GM12878 (cell line): ENCODE measurements at regions of chr2 and their contacts with region 1.

Region 1: GRCh38 chr2:219294356-219295351 is 14.5 kb downstream of the PTPRN start:
- DNase-seq: peak; percentile 60
- ATAC-seq: peak; percentile 93
- H3K4me3 ChIP-seq: peak overlapping the region; percentile 59; the same call in 1 of the 2 replicates
- H3K27ac ChIP-seq: no peak overlapping the region
- H3K4me1 ChIP-seq: peaks cover 8% of the 10 kb centered on the region
- H3K27me3 ChIP-seq: peaks cover 0 to 6% of the 10 kb centered on the region in 2 experiments; a peak in 2 of 4 replicates
- CTCF ChIP-seq: peak; percentile 98 to 99 (median 99)
- EP300 ChIP-seq: no peak
- POLR2A ChIP-seq: peak; percentile 77
- RAD21 ChIP-seq: peak; percentile 77

Region 2: GRCh38 chr2:219155054-219155644 is 139.5 kb before region 1 on chr2:
- CTCF ChIA-PET with region 1: interaction called, 208 read pairs
- POLR2A ChIA-PET with region 1: interaction called, 15 read pairs
- RAD21 ChIA-PET with region 1: interaction called, 30 read pairs
- SMC1A ChIA-PET with region 1: interaction called, 49 read pairs
- in situ Hi-C with region 1: loop called (anchors 5 kb)
- intact Hi-C with region 1: loop called (anchors 1 kb)
- DNase-seq: no peak
- ATAC-seq: peak; percentile 77
- H3K4me3 ChIP-seq: no peak overlapping the region
- H3K27ac ChIP-seq: no peak overlapping the region
- H3K4me1 ChIP-seq: peaks cover 4% of the 10 kb centered on the region; the same call in 1 of the 2 replicates
- H3K27me3 ChIP-seq: no peaks in the 10 kb centered on the region
- CTCF ChIP-seq: peak; percentile 37 to 66 (median 39); a peak in 5 of 6 replicates
- EP300 ChIP-seq: no peak
- POLR2A ChIP-seq: no peak
- RAD21 ChIP-seq: peak; percentile 78

Region 3: GRCh38 chr2:219171231-219171651 is 123.4 kb before region 1 on chr2:
- CTCF ChIA-PET with region 1: interaction called, 52 read pairs
- POLR2A ChIA-PET with region 1: interaction called, 12 read pairs
- RAD21 ChIA-PET with region 1: interaction called, 33 read pairs
- SMC1A ChIA-PET with region 1: interaction called, 20 read pairs
- in situ Hi-C with region 1: no loop called
- intact Hi-C with region 1: loop called (anchors 5 kb)
- DNase-seq: no peak
- ATAC-seq: peak; percentile 61
- H3K4me3 ChIP-seq: no peak overlapping the region
- H3K27ac ChIP-seq: no peak overlapping the region
- H3K4me1 ChIP-seq: no peaks in the 10 kb centered on the region; the same call in 1 of the 2 replicates
- H3K27me3 ChIP-seq: no peaks in the 10 kb centered on the region
- CTCF ChIP-seq: peak; percentile 65 to 77 (median 65)
- EP300 ChIP-seq: no peak
- POLR2A ChIP-seq: 0 out of 2 replicates have a peak, but pooled peaks have one; percentile 33
- RAD21 ChIP-seq: peak; percentile 52

Region 4: GRCh38 chr2:219206442-219207253 is 88.0 kb before region 1 on chr2 and contains the start of gene ZFAND2B:
- CTCF ChIA-PET with region 1: interaction called, 8 read pairs
- POLR2A ChIA-PET with region 1: interaction called, 12 read pairs
- RAD21 ChIA-PET with region 1: interaction called, 13 read pairs
- SMC1A ChIA-PET with region 1: interaction called, 4 read pairs
- in situ Hi-C with region 1: no loop called
- intact Hi-C with region 1: no loop called
- DNase-seq: peak; percentile 52
- ATAC-seq: peak; percentile 99
- H3K4me3 ChIP-seq: peak within 1 kb of the TSS; percentile 50
- H3K27ac ChIP-seq: peak within 1 kb of the TSS; percentile 72
- H3K4me1 ChIP-seq: peaks cover 8% of the 10 kb centered on the region
- H3K27me3 ChIP-seq: no peaks in the 10 kb centered on the region
- CTCF ChIP-seq: peak in 2 of 3 experiments; percentile 9 to 14; a peak in 1 of 6 replicates
- EP300 ChIP-seq: no peak
- POLR2A ChIP-seq: peak; percentile 99
- RAD21 ChIP-seq: no peak
- polyA plus RNA-seq, gene ZFAND2B: 5.4 to 10.7 TPM

Region 5: DNA sequence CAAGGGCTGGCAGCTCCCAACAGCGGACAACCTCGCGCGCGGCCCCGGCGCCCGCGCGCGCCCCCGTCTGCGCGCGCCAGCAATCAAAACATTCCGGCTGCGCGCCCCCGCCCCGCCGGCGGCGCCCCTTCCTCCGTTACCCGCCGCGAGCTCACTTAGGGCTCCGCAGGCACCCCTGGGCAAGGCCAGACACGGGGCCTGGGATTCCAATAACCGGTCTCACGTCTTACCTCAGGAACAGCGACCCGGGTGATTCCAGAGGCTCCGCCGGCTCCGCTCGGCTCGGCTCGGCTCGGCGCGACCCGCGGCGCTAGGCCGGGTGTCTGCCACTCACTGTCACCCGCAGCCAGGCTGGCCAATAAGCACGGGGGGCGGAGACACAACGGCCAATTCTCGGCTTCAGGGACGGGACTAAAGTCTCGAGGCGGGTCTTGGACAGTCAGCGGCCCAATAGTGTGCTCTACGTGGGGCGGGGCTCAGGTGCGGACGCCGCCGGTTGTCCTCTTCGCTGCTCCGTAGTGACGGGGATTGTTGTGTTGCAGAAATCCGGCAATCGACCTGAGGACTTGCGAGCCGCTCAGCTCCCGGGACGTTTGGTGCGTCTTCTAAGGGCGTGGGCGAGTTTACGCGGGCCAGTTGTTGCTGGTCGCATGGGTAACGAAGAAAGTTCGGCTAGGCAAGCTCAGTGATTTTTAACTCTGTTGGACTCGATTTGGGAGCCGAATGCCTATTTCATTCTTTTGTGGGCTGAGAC is 65.2 kb before region 1 on chr2 and contains the starts of genes ANKZF1 and ATG9A:
- CTCF ChIA-PET with region 1: interaction called, 16 read pairs
- POLR2A ChIA-PET with region 1: no interaction called
- RAD21 ChIA-PET with region 1: interaction called, 7 read pairs
- SMC1A ChIA-PET with region 1: interaction called, 3 read pairs
- in situ Hi-C with region 1: no loop called
- intact Hi-C with region 1: no loop called
- DNase-seq: peak; percentile 94
- ATAC-seq: peak; percentile 99
- H3K4me3 ChIP-seq: peak within 1 kb of the TSS; percentile 97
- H3K27ac ChIP-seq: peak within 1 kb of the TSS; percentile 87
- H3K4me1 ChIP-seq: peaks cover 15% of the 10 kb centered on the region
- H3K27me3 ChIP-seq: no peaks in the 10 kb centered on the region
- CTCF ChIP-seq: no peak
- EP300 ChIP-seq: no peak
- POLR2A ChIP-seq: peak; percentile 90
- RAD21 ChIP-seq: no peak
- polyA plus RNA-seq, gene ANKZF1: 3.1 to 5.0 TPM
- polyA plus RNA-seq, gene ATG9A: 0.16 TPM in 1 of 2 experiments, not detected in the other

Region 6: DNA sequence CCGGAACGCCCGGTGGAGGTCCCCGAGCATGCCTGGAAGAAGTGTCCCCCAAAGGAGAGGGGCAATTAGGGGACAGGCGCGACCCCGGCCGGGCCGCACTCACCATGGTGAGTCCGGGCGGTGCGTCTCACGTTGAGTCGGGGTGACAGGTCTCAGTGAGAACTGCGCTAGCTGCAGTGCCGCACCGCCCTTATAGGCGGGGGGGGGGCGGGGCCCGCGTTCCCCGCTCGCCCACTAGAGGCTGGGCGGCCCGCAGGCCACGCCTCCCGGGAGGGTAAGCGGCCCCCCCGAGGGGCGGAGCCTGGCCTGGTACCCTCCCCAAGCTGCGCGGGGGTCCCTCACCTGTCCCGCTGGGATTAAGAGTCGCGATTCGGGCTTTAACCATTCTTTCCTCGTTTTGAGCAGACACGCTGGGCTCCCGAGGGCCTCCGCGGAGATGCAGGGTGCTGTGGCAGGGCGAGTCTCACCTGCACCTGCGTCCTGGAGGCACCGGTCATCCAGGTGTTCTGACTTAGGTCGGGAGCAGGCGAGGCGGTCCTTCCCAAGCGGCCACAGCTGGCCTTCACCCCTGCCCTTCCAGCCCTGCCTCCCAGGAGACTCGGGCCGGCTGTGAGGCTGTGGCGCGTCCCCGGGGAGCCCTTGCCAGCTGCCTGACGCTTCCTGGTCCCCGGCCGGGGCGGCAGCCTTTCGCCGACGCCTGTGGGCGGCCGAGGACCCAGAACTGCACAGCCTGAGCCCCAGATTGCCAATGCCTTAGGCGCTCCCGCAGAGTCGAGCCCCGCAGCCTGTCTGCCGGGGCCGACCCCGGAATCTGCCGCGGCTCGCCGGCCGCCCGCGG is 40.7 kb before region 1 on chr2 and contains the start of gene TUBA4A:
- CTCF ChIA-PET with region 1: interaction called, 61 read pairs
- POLR2A ChIA-PET with region 1: interaction called, 22 read pairs
- RAD21 ChIA-PET with region 1: interaction called, 18 read pairs
- SMC1A ChIA-PET with region 1: interaction called, 11 read pairs
- in situ Hi-C with region 1: no loop called
- intact Hi-C with region 1: loop called (anchors 1 kb)
- DNase-seq: no peak
- ATAC-seq: peak; percentile 83
- H3K4me3 ChIP-seq: peak within 1 kb of the TSS; percentile 86
- H3K27ac ChIP-seq: peak within 1 kb of the TSS; percentile 77
- H3K4me1 ChIP-seq: peaks cover 22% of the 10 kb centered on the region
- H3K27me3 ChIP-seq: no peaks in the 10 kb centered on the region
- CTCF ChIP-seq: no peak
- EP300 ChIP-seq: 0 out of 4 replicates have a peak, but pooled peaks of 1 of the 2 experiments have one; percentile 23
- POLR2A ChIP-seq: peak; percentile 97
- RAD21 ChIP-seq: no peak
- polyA plus RNA-seq, gene TUBA4A: 58.2 to 88.6 TPM

Region 7: DNA sequence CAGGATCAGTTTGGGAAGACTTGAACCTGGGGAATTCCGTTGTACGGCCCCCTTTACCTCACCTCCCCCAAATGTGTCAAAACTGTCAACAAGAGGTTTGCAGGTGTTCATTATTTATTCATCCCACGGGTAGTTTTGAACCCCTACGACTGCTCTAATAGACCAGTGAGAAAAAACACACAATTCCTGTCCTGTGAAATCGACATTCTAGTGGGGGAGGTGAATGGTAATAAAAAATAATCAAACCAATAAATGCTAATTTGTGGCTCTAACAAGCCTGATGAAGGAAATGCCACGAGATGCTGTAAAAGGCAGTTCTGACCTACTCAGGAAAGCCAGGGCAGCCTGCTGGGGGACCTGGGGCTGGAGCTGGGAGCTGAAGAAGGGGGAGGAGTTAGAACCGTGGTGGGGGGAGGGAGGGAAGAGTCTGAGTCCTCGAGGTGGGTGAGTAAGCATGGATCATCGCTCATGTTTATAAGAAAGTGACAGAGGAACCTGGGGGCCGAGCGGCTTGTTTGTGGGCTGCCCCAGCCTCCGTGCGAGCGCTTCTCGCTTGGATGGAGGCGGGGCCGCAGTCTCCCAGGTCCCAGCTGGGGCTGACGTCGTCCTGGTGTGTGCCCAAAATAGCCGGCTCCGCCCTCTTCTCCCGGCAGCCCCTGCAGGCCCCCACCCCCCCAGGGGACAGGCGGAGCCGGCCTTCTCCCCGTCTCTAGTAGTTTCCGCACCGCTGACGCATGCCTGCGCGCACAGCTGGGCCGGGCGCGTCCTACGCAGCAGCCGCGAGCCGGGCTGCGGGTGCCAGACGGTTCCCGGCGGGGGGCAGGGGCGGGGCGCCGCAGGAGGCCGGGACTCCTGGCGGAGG is 15.8 kb before region 1 on chr2 and contains the start of gene DNAJB2:
- CTCF ChIA-PET with region 1: interaction called, 257 read pairs
- POLR2A ChIA-PET with region 1: interaction called, 50 read pairs
- RAD21 ChIA-PET with region 1: interaction called, 78 read pairs
- SMC1A ChIA-PET with region 1: interaction called, 96 read pairs
- in situ Hi-C with region 1: no loop called
- intact Hi-C with region 1: loop called (anchors 1 kb)
- DNase-seq: peak; percentile 89
- ATAC-seq: peak; percentile 91
- H3K4me3 ChIP-seq: peak within 1 kb of the TSS; percentile 71
- H3K27ac ChIP-seq: peak within 1 kb of the TSS; percentile 90
- H3K4me1 ChIP-seq: peaks cover 26% of the 10 kb centered on the region
- H3K27me3 ChIP-seq: no peaks in the 10 kb centered on the region
- CTCF ChIP-seq: no peak
- EP300 ChIP-seq: peak; percentile 72 to 83
- POLR2A ChIP-seq: peak; percentile 91
- RAD21 ChIP-seq: no peak
- polyA plus RNA-seq, gene DNAJB2: 0.26 to 0.90 TPM

Region 8: GRCh38 chr2:219331560-219332213 is 37.0 kb after region 1 on chr2:
- CTCF ChIA-PET with region 1: no interaction called
- POLR2A ChIA-PET with region 1: no interaction called
- RAD21 ChIA-PET with region 1: no interaction called
- SMC1A ChIA-PET with region 1: no interaction called
- in situ Hi-C with region 1: no loop called
- intact Hi-C with region 1: no loop called
- DNase-seq: no peak
- ATAC-seq: peak; percentile 29; the same call in 1 of the 3 replicates
- H3K4me3 ChIP-seq: no peak overlapping the region
- H3K27ac ChIP-seq: no peak overlapping the region
- H3K4me1 ChIP-seq: no peaks in the 10 kb centered on the region
- H3K27me3 ChIP-seq: peaks cover 0 to 5% of the 10 kb centered on the region in 2 experiments; a peak in 3 of 4 replicates
- CTCF ChIP-seq: no peak
- EP300 ChIP-seq: no peak
- POLR2A ChIP-seq: no peak
- RAD21 ChIP-seq: no peak